HEK293 (cell line): ENCODE measurements at regions of chr6 and their contacts with region 1.

Region 1: DNA sequence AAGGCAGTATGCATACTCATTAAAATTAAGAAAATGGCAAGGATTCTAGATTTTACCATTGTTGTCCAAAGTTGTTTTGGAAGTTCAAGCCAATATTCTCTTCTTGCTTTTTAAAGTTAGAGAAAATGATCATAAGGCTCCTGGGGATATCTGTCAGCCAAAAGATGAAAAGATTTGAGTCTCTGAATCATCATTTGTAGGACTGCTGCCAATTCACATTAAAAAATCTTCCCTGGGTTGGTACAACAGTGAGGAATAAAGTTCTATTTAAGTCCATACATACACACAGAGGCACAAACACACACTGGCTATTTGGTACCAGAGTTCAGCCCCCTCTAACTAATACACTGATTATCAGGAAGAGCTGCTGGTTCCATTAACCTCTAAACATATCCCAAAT is 620.1 kb downstream of the COL12A1 start:
- H3K4me3 ChIP-seq: no peak overlapping the region
- H3K27ac ChIP-seq: no peak overlapping the region
- H3K4me1 ChIP-seq: no peaks in the 10 kb centered on the region
- CTCF ChIP-seq: no peak

Region 2: DNA sequence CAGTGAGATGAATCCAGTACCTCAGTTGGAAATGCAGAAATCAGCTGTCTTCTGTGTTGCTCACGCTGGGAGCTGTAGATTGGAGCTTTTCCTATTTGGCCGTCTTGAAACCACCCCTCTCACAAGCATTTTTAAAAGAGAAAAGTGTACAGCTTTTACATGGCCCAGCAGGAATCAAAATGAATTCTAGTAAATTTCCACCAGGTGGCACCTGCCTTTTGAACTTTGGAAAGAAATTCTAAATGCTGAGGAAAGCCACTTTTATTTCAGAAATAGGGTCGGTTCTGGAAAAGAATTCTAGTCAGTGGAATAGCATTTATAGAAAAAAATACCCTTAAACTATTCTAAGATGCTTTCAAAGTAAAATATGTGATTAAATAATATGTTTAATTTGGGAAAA is 242.0 kb before region 1 on chr6:
- CTCF ChIA-PET with region 1: no interaction called
- POLR2A ChIA-PET with region 1: no interaction called
- H3K4me3 ChIP-seq: no peak overlapping the region
- H3K27ac ChIP-seq: no peak overlapping the region
- H3K4me1 ChIP-seq: no peaks in the 10 kb centered on the region
- CTCF ChIP-seq: no peak

Region 3: GRCh38 chr6:74574794-74575193 is 11.0 kb before region 1 on chr6:
- CTCF ChIA-PET with region 1: interaction called, 10 read pairs
- POLR2A ChIA-PET with region 1: no interaction called
- H3K4me3 ChIP-seq: no peak overlapping the region
- H3K27ac ChIP-seq: no peak overlapping the region
- H3K4me1 ChIP-seq: no peaks in the 10 kb centered on the region
- CTCF ChIP-seq: no peak